Activated CD4-positive, alpha-beta T cell treated with anti-CD3 and anti-CD28 coated beads for 36 hours (primary cell): ENCODE measurements at regions of chr12 and their contacts with region 1.

Region 1: DNA sequence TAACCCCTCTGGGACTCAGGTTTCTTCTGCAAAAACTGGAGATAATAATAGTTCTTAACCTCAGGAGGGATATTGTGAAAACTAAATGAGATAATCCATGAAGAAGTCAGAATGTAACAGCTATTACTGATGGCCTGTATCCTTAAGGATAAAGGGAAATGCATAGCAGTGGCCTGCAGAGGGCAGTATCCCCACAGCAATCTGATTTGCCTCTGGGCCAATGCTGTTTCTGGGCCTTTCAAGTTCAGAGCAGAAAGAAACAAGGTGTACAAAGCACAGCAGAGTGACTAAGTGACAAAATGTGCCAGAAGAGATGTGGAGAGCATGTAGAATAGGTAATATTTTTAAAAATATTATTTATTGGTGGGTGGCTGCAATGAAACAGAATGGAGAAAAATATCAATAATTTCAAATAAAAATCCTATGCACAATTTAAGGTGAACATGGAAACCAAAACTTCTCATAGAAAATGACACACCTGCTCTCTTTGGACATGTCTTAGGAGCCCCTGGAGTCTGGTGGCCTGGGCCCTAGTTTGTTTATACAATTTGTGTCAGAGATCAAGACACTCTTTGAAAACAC is 90.3 kb downstream of the C12orf75 start:
- DNase-seq: peak; percentile 83
- ATAC-seq: peak; percentile 73
- H3K4me3 Mint-ChIP-seq: no peak overlapping the region
- H3K27ac Mint-ChIP-seq: no peak overlapping the region
- H3K4me1 Mint-ChIP-seq: peaks cover 13% of the 10 kb centered on the region
- H3K27me3 Mint-ChIP-seq: peaks cover under 1% of the 10 kb centered on the region

Region 2: DNA sequence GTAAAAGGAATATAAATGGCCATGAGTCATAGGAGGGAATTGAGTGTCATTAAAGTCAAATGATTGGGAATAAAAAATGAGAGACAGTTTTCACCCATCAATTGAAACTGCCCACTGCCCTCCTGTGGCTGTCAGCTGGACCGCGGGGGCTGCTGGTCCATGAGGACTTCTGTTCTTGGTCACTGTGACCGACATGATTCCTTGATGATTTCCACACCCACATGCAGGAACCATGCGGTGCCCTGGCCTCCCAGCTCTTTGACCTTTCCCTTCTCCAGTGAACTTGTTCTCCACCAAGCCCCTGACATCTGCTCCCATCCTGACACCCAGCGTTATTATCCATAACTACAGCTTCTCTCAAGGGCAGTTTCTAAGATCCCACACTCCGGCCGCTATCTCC is 41.8 kb before region 1 on chr12:
- CTCF ChIA-PET with region 1: no interaction called
- POLR2A ChIA-PET with region 1: no interaction called
- intact Hi-C with region 1: no loop called
- DNase-seq: no peak
- ATAC-seq: no peak
- H3K4me3 Mint-ChIP-seq: no peak overlapping the region
- H3K27ac Mint-ChIP-seq: no peak overlapping the region
- H3K4me1 Mint-ChIP-seq: no peaks in the 10 kb centered on the region
- H3K27me3 Mint-ChIP-seq: no peaks in the 10 kb centered on the region

Region 3: GRCh38 chr12:105440037-105440664 is 19.4 kb after region 1 on chr12:
- CTCF ChIA-PET with region 1: no interaction called
- POLR2A ChIA-PET with region 1: no interaction called
- intact Hi-C with region 1: no loop called
- DNase-seq: no peak
- ATAC-seq: no peak
- H3K4me3 Mint-ChIP-seq: no peak overlapping the region
- H3K27ac Mint-ChIP-seq: no peak overlapping the region
- H3K4me1 Mint-ChIP-seq: no peaks in the 10 kb centered on the region
- H3K27me3 Mint-ChIP-seq: peaks cover 27% of the 10 kb centered on the region

Region 4: GRCh38 chr12:105798256-105798845 is 377.6 kb after region 1 on chr12:
- CTCF ChIA-PET with region 1: no interaction called
- POLR2A ChIA-PET with region 1: no interaction called
- intact Hi-C with region 1: no loop called
- DNase-seq: no peak
- ATAC-seq: no peak
- H3K4me3 Mint-ChIP-seq: no peak overlapping the region
- H3K27ac Mint-ChIP-seq: no peak overlapping the region
- H3K4me1 Mint-ChIP-seq: no peaks in the 10 kb centered on the region
- H3K27me3 Mint-ChIP-seq: no peaks in the 10 kb centered on the region

Region 5: GRCh38 chr12:106149096-106149784 is 728.5 kb after region 1 on chr12:
- CTCF ChIA-PET with region 1: interaction called, 10 read pairs
- POLR2A ChIA-PET with region 1: no interaction called
- intact Hi-C with region 1: no loop called
- DNase-seq: peak; percentile 26
- ATAC-seq: no peak
- H3K4me3 Mint-ChIP-seq: no peak overlapping the region
- H3K27ac Mint-ChIP-seq: no peak overlapping the region
- H3K4me1 Mint-ChIP-seq: no peaks in the 10 kb centered on the region
- H3K27me3 Mint-ChIP-seq: peaks cover 25% of the 10 kb centered on the region

Region 6: DNA sequence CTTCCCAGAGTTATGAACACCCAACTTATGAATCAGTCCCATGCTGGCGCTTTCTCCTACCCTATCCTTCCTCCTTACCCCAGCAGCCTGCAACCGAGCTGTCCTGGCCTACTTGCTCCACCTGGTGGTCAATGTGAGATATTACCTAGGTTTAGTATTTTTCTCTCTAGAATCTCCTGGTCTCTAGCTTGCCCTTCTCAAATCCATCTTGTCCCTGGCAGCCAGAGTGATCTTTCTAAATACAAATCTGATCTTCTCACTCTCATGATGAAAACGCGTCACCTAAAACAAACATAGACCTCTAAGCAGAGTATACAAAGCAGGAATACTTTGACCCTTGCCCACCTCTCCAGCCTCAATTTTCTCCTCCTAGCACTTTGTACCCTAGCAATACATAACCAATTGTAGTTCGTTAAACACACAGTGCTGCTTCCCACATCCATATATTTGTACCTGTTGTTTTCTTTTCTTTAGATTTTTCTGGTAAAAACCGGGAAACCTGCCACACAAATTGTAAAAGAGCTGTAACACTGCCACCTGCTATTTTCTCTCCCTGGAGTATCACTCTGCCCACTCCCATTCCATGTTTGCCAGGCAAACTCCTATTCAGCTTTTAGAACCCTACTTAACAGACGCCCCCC is 861.8 kb after region 1 on chr12:
- CTCF ChIA-PET with region 1: no interaction called
- POLR2A ChIA-PET with region 1: no interaction called
- intact Hi-C with region 1: loop called (anchors 5 kb)
- DNase-seq: peak; percentile 72
- ATAC-seq: peak; percentile 83
- H3K4me3 Mint-ChIP-seq: no peak overlapping the region
- H3K27ac Mint-ChIP-seq: no peak overlapping the region
- H3K4me1 Mint-ChIP-seq: peaks cover 11% of the 10 kb centered on the region
- H3K27me3 Mint-ChIP-seq: peaks cover 1% of the 10 kb centered on the region